Activated CD4-positive, alpha-beta memory T cell treated with anti-CD3 and anti-CD28 coated beads, Interleukin-2, amount 10 ng/mL, durations not matched to agents 7 days and 5 days (primary cell): ENCODE measurements at regions of chr2 and their contacts with region 1.

Region 1: GRCh38 chr2:219160186-219161017 is at the start of gene NHEJ1:
- DNase-seq: peak; percentile 94
- H3K4me3 Mint-ChIP-seq: peak within 1 kb of the TSS; percentile 88
- H3K27ac Mint-ChIP-seq: peak within 1 kb of the TSS; percentile 86
- H3K4me1 Mint-ChIP-seq: peaks cover 20% of the 10 kb centered on the region
- H3K27me3 Mint-ChIP-seq: no peaks in the 10 kb centered on the region
- total RNA-seq, gene NHEJ1: 12.0 to 12.2 TPM

Region 2: DNA sequence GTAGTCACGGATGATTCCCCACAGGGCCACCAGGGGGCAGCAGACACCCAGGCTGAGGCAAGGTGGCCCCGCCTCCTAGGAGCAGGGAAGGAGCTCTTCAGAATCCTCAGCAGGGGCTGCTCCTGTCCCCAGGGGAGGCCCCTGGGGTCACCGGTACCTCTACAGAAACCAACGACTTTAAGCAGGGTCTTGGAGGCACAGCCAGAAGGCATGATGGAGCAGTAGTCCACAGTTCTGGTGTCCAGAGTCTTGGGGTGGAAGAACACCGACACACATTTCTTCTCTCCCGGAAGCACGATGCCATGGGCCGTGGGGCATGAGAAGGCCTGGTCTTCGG is 130.6 kb before region 1 on chr2:
- CTCF ChIA-PET with region 1: interaction called, 76 read pairs
- POLR2A ChIA-PET with region 1: no interaction called
- DNase-seq: peak; percentile 76
- H3K4me3 Mint-ChIP-seq: no peak overlapping the region
- H3K27ac Mint-ChIP-seq: no peak overlapping the region
- H3K4me1 Mint-ChIP-seq: no peaks in the 10 kb centered on the region
- H3K27me3 Mint-ChIP-seq: peaks cover 23% of the 10 kb centered on the region

Region 3: GRCh38 chr2:219087848-219088247 is 72.6 kb before region 1 on chr2:
- CTCF ChIA-PET with region 1: no interaction called
- POLR2A ChIA-PET with region 1: no interaction called
- DNase-seq: no peak
- H3K4me3 Mint-ChIP-seq: no peak overlapping the region
- H3K27ac Mint-ChIP-seq: no peak overlapping the region
- H3K4me1 Mint-ChIP-seq: peaks cover 7% of the 10 kb centered on the region
- H3K27me3 Mint-ChIP-seq: no peaks in the 10 kb centered on the region

Region 4: GRCh38 chr2:219171231-219171651 is 10.8 kb after region 1 on chr2:
- CTCF ChIA-PET with region 1: interaction called, 25 read pairs
- POLR2A ChIA-PET with region 1: interaction called, 30 read pairs
- DNase-seq: peak; percentile 24
- H3K4me3 Mint-ChIP-seq: no peak overlapping the region
- H3K27ac Mint-ChIP-seq: no peak overlapping the region
- H3K4me1 Mint-ChIP-seq: peaks cover 42% of the 10 kb centered on the region
- H3K27me3 Mint-ChIP-seq: no peaks in the 10 kb centered on the region

Region 5: GRCh38 chr2:219206442-219207253 is 46.2 kb after region 1 on chr2 and contains the start of gene ZFAND2B:
- CTCF ChIA-PET with region 1: interaction called, 44 read pairs
- POLR2A ChIA-PET with region 1: interaction called, 9 read pairs
- DNase-seq: peak; percentile 96
- H3K4me3 Mint-ChIP-seq: peak within 1 kb of the TSS; percentile 79
- H3K27ac Mint-ChIP-seq: peak within 1 kb of the TSS; percentile 88
- H3K4me1 Mint-ChIP-seq: peaks cover 52% of the 10 kb centered on the region
- H3K27me3 Mint-ChIP-seq: no peaks in the 10 kb centered on the region
- total RNA-seq, gene ZFAND2B: 51.4 to 56.7 TPM

Region 6: DNA sequence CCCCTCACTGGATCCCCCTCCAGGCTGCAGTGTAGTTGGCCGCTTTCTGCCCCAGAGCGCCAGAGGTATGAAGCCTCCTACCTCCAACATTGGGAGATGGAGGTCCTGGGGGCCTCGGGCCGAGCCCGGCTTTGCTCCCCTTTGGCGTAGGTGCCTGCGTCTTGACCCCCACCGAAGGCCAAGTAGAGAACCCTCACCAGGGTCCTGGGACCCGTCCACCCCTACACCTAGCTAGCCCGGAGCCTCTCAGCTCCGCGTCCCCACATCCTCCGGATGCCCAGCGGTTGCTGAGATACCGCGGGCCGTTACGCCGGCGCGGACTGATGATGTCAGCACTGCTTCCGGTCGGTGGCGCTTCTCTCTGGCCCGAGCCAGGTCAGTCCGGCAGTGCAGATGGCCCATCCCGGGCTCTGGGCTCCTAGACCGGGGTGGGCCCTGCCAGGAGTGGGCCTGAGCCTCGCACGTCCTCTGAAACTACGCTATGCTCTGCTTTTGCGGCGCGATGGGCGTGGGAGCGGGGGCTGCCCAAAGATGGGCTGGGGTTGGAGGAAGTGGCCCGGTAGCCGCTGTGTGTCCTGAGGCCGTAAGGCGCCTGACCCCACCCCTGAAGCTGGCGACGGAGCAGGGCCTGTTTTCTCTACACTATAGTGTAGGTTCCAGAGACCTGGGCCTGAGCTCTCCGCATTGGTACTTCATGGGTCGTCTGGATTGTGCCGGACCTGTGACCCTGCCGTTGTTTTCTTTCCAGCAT is 84.9 kb after region 1 on chr2 and contains the starts of genes GLB1L and STK16:
- CTCF ChIA-PET with region 1: interaction called, 12 read pairs
- POLR2A ChIA-PET with region 1: interaction called, 3 read pairs
- DNase-seq: peak; percentile 92
- H3K4me3 Mint-ChIP-seq: peak within 1 kb of the TSS; percentile 100
- H3K27ac Mint-ChIP-seq: peak within 1 kb of the TSS; percentile 81
- H3K4me1 Mint-ChIP-seq: peaks cover 66% of the 10 kb centered on the region
- H3K27me3 Mint-ChIP-seq: no peaks in the 10 kb centered on the region
- total RNA-seq, gene GLB1L: 6.2 to 7.3 TPM
- total RNA-seq, gene STK16: 41.6 to 42.3 TPM

Region 7: GRCh38 chr2:219278655-219279516 is 118.5 kb after region 1 on chr2 and contains the start of gene DNAJB2:
- CTCF ChIA-PET with region 1: interaction called, 33 read pairs
- POLR2A ChIA-PET with region 1: interaction called, 15 read pairs
- DNase-seq: peak; percentile 99
- H3K4me3 Mint-ChIP-seq: peak within 1 kb of the TSS; percentile 87
- H3K27ac Mint-ChIP-seq: peak within 1 kb of the TSS; percentile 93
- H3K4me1 Mint-ChIP-seq: peaks cover 42% of the 10 kb centered on the region
- H3K27me3 Mint-ChIP-seq: peaks cover 3% of the 10 kb centered on the region
- total RNA-seq, gene DNAJB2: 57.0 to 59.7 TPM

Region 8: GRCh38 chr2:219314804-219315468 is 154.5 kb after region 1 on chr2:
- CTCF ChIA-PET with region 1: no interaction called
- POLR2A ChIA-PET with region 1: no interaction called
- DNase-seq: no peak
- H3K4me3 Mint-ChIP-seq: no peak overlapping the region
- H3K27ac Mint-ChIP-seq: no peak overlapping the region
- H3K4me1 Mint-ChIP-seq: no peaks in the 10 kb centered on the region
- H3K27me3 Mint-ChIP-seq: peaks cover 12% of the 10 kb centered on the region